Vagina (tissue), 2 donors: ENCODE measurements at regions of chr3 and their contacts with region 1.

Region 1: DNA sequence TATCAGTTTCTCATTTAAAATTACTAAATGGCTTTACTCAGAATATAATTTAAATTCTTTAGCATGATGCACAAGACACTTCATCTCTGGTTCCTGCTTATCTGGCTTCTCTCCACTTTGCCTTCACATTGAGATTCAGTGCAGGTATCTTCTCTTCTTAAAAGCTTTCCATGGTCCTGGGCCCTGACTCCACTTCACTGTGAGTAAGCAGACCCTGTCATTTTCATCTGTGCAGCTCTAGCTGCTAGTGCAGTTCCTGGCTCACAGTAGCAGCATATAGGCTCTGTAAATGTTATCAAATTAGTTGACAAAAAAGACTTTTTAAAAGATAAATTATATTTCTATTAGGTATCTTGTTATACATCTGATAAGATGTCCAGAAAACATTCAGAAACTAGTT is 58.8 kb downstream of the BCHE start:
- DNase-seq: no peak
- H3K4me3 ChIP-seq: no peak overlapping the region
- H3K27ac ChIP-seq: no peak overlapping the region
- H3K4me1 ChIP-seq: no peaks in the 10 kb centered on the region
- H3K27me3 ChIP-seq: no peaks in the 10 kb centered on the region
- CTCF ChIP-seq: no peak
- POLR2A ChIP-seq: no peak

Region 2: GRCh38 chr3:165797551-165797950 is 19.1 kb after region 1 on chr3:
- intact Hi-C with region 1: loop called (anchors 1 kb)
- DNase-seq: no peak
- H3K4me3 ChIP-seq: no peak overlapping the region
- H3K27ac ChIP-seq: no peak overlapping the region
- H3K4me1 ChIP-seq: no peaks in the 10 kb centered on the region
- H3K27me3 ChIP-seq: no peaks in the 10 kb centered on the region
- CTCF ChIP-seq: no peak
- POLR2A ChIP-seq: no peak

Region 3: DNA sequence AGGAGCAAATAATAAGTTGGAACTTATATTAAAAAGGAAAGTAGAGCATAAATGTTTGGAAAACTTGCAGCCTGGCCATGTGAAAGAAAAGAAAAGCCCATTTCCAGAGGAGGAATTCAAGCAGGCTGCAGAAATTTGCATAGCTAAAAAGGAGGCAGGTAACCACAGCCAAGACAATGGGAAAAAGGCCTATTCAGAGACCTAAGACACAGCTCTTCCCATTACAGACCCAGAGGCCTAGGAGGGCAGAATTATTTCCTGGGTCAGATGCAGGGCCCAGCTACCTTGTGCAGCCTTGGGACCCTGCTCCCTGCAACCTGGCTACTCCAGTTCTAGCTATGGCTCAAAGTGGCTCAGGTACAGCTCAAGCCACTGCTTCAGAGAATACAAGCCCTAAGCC is 293.4 kb after region 1 on chr3:
- intact Hi-C with region 1: no loop called
- DNase-seq: no peak
- H3K4me3 ChIP-seq: no peak overlapping the region
- H3K27ac ChIP-seq: no peak overlapping the region
- H3K4me1 ChIP-seq: no peaks in the 10 kb centered on the region
- H3K27me3 ChIP-seq: no peaks in the 10 kb centered on the region
- CTCF ChIP-seq: no peak
- POLR2A ChIP-seq: no peak